Sigmoid colon (tissue), 7 donors: ENCODE measurements at regions of chr1 and their contacts with region 1.

Region 1: DNA sequence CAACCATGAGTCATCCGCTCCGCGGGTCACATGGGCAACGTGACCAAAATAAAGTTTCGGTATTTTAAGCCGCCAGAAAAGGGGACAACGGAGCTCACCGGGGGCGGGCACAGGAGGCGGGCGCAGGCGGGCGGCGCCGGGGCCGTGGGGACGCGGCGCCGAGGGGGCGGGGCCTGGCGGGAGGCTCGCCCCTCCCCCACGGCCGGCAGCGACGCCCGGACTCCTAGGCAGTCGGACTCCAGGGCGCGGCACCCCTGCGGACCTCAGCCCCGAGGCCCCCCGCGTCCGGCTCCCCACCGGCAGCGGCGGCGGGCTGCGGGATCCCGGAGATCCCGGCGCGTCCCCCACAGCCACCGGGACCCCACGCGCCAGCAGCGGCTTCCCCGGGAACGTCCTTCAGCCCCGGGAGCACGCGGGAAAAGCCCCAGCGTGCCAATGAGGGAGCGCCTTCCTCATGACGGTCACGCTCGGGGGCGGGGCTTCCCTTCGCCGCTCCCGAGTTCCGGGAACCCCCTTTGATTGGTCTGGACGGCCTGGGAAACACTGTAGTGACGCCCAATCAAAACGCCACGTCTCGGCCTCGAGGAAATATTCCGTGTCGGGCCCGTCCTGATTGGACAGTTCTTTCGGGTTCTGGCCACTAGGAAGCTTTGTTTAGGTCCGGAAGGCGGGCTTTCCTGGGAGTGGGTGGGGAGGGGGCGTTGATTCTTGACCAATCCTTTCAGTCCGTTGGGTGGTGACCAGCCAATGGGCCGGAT is 515 bp upstream of the CAMTA1 start:
- DNase-seq: peak; percentile 100
- H3K4me3 ChIP-seq: peak overlapping the region; percentile 63 to 83 (median 78)
- H3K27ac ChIP-seq: peak overlapping the region; percentile 97 to 100 (median 98)
- H3K4me1 ChIP-seq: peaks cover 0 to 40% (median 36%) of the 10 kb centered on the region in 4 donors
- H3K27me3 ChIP-seq: no peaks in the 10 kb centered on the region
- CTCF ChIP-seq: no peak
- EP300 ChIP-seq: peak in 1 of 4 donors; percentile 64
- POLR2A ChIP-seq: peak; percentile 62 to 81

Region 2: DNA sequence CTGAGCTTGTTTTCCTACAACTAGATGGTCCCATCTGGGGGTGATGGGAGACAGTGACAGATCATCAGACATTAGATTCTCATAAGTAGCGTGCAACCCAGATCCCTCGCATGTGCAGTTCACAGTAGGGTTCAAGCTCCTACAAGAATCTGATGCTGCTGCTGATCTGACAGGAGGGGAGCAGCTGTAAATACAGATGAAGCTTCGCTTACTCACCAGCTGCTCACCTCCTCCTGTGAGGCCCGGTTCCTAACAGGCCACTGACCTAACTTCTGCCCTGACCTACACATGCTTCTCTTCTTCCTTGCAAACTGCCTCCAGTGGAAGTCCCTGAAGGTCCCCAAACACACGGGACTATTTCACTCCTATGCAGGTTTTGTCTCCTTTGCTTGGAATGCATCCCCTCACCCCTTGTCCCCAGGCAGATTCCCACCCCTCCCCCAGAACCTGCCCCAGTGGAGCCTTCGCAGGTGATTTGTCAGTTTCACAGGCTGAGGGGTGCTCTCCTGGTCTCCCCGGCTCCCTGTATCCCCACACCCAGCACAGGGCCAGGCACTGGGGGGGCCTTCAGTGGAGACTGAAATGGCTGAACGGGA is 210.6 kb before region 1 on chr1:
- intact Hi-C with region 1: no loop called
- DNase-seq: no peak
- H3K4me3 ChIP-seq: no peak overlapping the region
- H3K27ac ChIP-seq: no peak overlapping the region
- H3K4me1 ChIP-seq: peaks cover 0 to 5% (median 5%) of the 10 kb centered on the region in 4 donors
- H3K27me3 ChIP-seq: no peaks in the 10 kb centered on the region
- CTCF ChIP-seq: no peak
- EP300 ChIP-seq: no peak
- POLR2A ChIP-seq: no peak

Region 3: DNA sequence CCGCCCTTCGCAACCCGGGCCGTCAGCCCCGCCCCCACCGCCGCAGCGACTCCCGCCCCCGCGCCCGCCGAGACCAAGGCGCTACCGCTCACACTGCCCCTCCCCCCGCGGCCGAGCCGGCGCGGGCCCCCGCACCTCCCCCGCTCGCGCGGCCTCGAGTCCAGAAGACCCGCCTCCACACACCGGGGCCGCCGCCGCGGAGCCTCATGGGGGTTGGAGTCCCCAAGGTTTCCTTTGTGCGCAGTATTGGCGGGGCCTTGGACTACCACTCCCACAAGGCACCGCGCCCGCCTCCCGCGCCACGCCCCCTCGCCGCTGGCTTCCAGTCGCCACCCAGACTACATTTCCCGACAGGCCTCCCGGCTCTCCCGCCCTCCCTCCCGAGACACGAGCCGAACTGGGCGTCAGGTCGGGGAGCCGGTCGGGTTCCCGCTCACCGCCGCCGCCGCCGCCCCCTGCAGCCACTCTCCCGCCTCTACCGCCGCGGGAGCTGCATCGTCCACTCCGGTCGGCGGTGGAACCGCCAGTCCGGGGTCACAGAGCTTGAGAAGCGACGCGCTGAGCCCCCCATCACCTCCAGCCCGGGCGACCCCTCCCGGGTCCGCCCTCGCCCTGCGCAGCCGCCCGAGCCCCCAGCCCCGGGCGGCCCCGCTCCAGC is 171.2 kb before region 1 on chr1 and contains the start of gene PHF13:
- intact Hi-C with region 1: loop called (anchors 10 kb)
- DNase-seq: peak; percentile 100
- H3K4me3 ChIP-seq: peak within 1 kb of the TSS; percentile 96 to 100 (median 100)
- H3K27ac ChIP-seq: peak within 1 kb of the TSS; percentile 99 to 100 (median 99)
- H3K4me1 ChIP-seq: peaks cover 0 to 61% (median 54%) of the 10 kb centered on the region in 4 donors
- H3K27me3 ChIP-seq: no peaks in the 10 kb centered on the region
- CTCF ChIP-seq: no peak
- EP300 ChIP-seq: peak in 1 of 4 donors; percentile 22
- POLR2A ChIP-seq: peak; percentile 54 to 78
- total RNA-seq, gene PHF13: 12.5 to 19.4 (median 15.9) TPM

Region 4: DNA sequence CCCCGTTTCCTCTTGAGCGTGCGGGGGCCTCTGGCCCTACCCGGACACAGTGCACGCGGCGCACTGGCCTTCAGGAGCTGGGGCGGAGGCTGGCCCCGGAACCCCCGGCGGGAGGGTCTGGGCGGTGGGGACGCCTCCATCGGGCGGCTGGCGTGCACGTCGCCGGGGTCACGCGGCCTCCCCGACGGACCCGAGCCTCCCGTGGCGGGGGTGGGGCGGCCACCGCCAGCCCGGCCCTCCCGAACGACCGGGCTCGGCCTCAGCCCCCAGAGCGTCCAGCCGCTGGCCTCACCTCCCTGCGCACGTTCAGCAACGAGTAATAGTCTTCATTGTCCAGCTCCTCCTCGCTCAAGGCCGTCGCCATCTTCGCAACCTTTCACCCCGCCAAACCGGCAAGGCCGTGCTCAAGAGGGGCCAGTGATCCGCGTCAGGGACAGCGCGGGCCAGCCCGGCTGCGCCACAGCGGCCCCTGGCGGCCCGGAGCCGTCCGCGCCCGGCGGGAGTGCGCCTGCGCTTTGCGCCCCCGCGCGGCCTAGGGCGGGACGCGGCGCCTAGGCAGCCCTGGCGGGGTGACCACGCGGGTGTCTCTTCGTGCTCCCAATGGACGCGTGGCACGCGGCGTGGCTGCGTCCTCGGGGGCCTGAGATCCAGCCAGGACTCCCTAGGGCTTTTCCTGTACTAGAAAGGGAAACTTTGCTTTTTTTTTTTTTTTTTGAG is 83.1 kb before region 1 on chr1 and contains the start of gene DNAJC11:
- intact Hi-C with region 1: loop called (anchors 2 kb)
- DNase-seq: peak; percentile 93
- H3K4me3 ChIP-seq: peak within 1 kb of the TSS; percentile 74 to 100 (median 99)
- H3K27ac ChIP-seq: peak within 1 kb of the TSS; percentile 80 to 93 (median 88)
- H3K4me1 ChIP-seq: peaks cover 0 to 55% (median 38%) of the 10 kb centered on the region in 4 donors
- H3K27me3 ChIP-seq: no peaks in the 10 kb centered on the region
- CTCF ChIP-seq: peak in 2 of 4 experiments; percentile 15 to 83
- EP300 ChIP-seq: no peak
- POLR2A ChIP-seq: no peak
- total RNA-seq, gene DNAJC11: 21.0 to 34.6 (median 23.8) TPM

Region 5: DNA sequence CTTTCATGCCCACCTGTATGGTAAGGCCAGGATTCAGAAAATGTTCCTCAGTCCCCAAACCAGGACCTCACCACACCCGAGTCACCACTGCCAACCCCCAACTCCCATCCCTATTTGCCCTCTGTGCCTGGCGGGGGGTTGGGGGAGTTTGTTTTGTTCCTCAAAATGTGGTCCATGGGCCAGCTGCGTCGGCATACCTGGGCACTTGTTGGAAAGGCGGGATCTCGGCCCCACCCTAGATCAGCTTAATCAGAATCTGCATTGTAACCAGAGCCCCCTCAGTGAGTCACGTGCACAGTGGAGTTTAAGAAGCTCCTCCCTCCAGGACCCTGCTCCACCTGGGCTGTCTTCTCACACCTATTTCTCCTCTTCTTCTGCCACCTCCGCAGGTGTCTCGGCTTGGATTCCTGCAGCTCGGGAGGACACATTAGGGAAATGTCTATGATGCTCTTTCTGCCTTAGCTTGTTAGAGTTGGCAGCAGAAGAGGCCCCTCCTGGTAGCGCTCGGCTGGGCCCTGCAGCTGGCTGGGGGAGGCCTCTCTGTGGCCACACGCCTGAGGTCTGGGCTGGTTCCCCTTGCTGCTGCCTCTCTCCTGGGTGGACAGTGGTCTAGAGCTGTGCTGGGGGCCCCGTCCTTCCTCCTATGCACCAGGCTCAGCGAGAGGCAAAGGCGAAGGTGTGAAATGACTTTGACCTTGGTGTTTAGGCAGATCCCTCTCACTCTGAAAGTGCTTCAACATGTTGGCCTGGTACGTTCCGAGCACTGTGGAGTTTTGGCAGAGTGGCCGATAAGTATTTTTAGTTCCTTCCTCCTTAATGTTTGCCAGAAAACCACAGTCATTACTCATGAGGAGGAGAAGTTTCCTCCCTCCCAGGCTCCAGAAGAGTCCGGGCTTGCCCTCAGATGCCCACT is 41.3 kb before region 1 on chr1:
- intact Hi-C with region 1: loop called (anchors 2 kb)
- DNase-seq: peak; percentile 78
- H3K4me3 ChIP-seq: peak overlapping the region in 2 of 4 donors; percentile 6
- H3K27ac ChIP-seq: peak overlapping the region; percentile 70 to 89 (median 83)
- H3K4me1 ChIP-seq: peaks cover 0 to 20% (median 17%) of the 10 kb centered on the region in 4 donors
- H3K27me3 ChIP-seq: no peaks in the 10 kb centered on the region
- CTCF ChIP-seq: no peak
- EP300 ChIP-seq: no peak
- POLR2A ChIP-seq: no peak

Region 6: GRCh38 chr1:6889875-6890480 is 105.2 kb after region 1 on chr1:
- intact Hi-C with region 1: no loop called
- DNase-seq: no peak
- H3K4me3 ChIP-seq: no peak overlapping the region
- H3K27ac ChIP-seq: no peak overlapping the region
- H3K4me1 ChIP-seq: no peaks in the 10 kb centered on the region
- H3K27me3 ChIP-seq: no peaks in the 10 kb centered on the region
- CTCF ChIP-seq: peak; percentile 26 to 70 (median 58)
- EP300 ChIP-seq: no peak
- POLR2A ChIP-seq: no peak